ENCODE measurements at regions of chrX and their contacts with region 1.

Region 1: GRCh38 chrX:138745196-138745595 is 33.7 kb upstream of the FGF13 start:
- DNase-seq: peak; percentile 76
- H3K4me3 ChIP-seq: no peak overlapping the region
- H3K27ac ChIP-seq: no peak overlapping the region
- H3K4me1 ChIP-seq: no peaks in the 10 kb centered on the region
- H3K27me3 ChIP-seq: no peaks in the 10 kb centered on the region
- CTCF ChIP-seq: peak; percentile 77

Region 2: GRCh38 chrX:137847376-137847775 is 897.8 kb before region 1 on chrX:
- CTCF ChIA-PET with region 1: interaction called, 10 read pairs
- POLR2A ChIA-PET with region 1: no interaction called
- intact Hi-C with region 1: no loop called
- DNase-seq: no peak
- H3K4me3 ChIP-seq: no peak overlapping the region
- H3K27ac ChIP-seq: no peak overlapping the region
- H3K4me1 ChIP-seq: no peaks in the 10 kb centered on the region
- H3K27me3 ChIP-seq: no peaks in the 10 kb centered on the region
- CTCF ChIP-seq: no peak

Region 3: DNA sequence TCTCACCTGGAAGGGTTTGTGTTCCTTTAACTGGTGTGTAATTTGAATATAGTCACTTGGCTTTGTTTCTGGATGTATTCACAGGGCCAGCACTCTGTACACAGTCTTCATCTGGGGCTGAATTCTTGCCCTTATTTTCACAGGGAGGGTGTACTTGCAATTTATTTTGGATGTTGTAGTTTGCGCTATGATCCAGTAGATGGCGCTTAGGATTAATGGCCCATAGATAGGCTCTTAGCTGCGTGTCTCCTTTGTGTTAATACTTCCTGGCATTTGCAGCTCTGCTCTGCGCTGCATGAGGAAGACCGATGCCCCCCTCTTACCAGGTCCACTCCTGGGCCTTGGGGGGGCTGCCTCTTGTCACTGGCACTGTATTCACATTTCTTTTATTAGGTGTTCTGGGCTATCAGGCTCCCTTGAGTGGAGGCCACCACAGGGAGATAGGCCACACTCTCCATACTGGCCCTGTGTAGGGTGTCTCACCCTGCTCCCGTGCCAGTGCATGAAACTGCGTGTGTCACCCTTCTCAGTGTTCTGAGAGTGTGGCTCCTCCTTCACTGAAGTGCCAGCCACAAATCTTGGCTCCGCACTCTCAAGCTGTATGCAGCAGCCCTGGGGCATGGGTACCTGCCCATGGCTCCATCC is 617.0 kb before region 1 on chrX:
- CTCF ChIA-PET with region 1: no interaction called
- POLR2A ChIA-PET with region 1: no interaction called
- intact Hi-C with region 1: loop called (anchors 2 kb)
- DNase-seq: peak; percentile 73
- H3K4me3 ChIP-seq: no peak overlapping the region
- H3K27ac ChIP-seq: no peak overlapping the region
- H3K4me1 ChIP-seq: no peaks in the 10 kb centered on the region
- H3K27me3 ChIP-seq: no peaks in the 10 kb centered on the region
- CTCF ChIP-seq: peak; percentile 77

Region 4: DNA sequence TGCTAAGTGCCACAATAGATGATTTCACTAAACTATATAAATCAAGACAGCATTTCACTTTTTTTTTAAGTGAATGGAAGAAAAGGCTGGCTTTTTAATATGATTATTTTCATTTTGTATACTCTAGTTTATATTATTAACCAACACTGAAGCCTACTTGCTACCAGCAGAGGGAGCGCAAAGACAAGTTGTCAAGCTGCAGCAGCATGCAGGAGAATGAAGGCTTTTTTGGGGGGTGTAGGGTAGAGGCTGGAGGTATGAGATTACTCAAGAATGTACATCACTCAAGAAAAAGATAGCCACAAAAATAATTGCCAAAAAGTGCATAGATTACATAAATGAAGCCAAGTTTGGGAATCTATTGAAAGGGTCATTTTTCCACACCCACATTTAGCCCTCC is 553.2 kb before region 1 on chrX:
- CTCF ChIA-PET with region 1: no interaction called
- POLR2A ChIA-PET with region 1: no interaction called
- intact Hi-C with region 1: loop called (anchors 1 kb)
- DNase-seq: peak; percentile 70
- H3K4me3 ChIP-seq: no peak overlapping the region
- H3K27ac ChIP-seq: no peak overlapping the region
- H3K4me1 ChIP-seq: no peaks in the 10 kb centered on the region
- H3K27me3 ChIP-seq: no peaks in the 10 kb centered on the region
- CTCF ChIP-seq: peak; percentile 72

Region 5: GRCh38 chrX:138298259-138298658 is 446.9 kb before region 1 on chrX:
- CTCF ChIA-PET with region 1: no interaction called
- POLR2A ChIA-PET with region 1: no interaction called
- intact Hi-C with region 1: loop called (anchors 5 kb)
- DNase-seq: peak; percentile 2
- H3K4me3 ChIP-seq: no peak overlapping the region
- H3K27ac ChIP-seq: no peak overlapping the region
- H3K4me1 ChIP-seq: no peaks in the 10 kb centered on the region
- H3K27me3 ChIP-seq: no peaks in the 10 kb centered on the region
- CTCF ChIP-seq: peak; percentile 43; the same call in 1 of the 2 replicates

Measured in A673 (cell line).